Sigmoid colon (tissue), 7 donors: ENCODE measurements at regions of chr1 and their contacts with region 1.

Region 1: DNA sequence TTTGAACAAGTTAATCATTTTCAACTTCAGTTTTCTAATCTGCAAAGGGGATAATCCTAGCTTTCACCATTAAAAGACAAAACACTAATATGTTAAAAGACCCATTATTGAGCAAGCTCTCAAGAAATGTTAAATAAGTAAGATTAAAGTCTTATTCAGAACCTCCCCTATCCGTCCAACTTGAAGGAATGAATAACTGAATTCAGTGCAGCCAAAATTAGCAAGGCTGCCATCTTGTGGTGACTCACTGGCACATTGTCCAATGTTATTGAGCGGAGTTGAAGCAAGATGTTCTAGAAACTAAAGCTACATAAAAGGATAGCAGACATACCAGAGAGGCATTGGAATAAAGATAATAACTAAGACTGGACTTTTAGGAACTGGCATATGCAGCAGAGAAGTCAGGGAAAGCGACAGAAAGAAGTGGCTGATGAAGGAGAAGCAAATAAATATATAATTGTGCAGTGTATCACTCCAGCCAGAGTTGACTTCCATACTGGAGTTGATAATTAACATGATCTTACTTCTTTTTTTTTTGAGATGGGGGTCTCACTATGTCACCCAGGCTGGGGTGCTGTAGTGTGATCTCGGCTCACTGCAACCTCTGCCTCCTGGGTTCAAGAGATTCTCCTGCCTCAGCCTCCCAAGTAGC is 8.2 kb upstream of the CAP1 start:
- DNase-seq: no peak
- H3K4me3 ChIP-seq: no peak overlapping the region
- H3K27ac ChIP-seq: no peak overlapping the region
- H3K4me1 ChIP-seq: peaks cover 0 to 25% (median 15%) of the 10 kb centered on the region in 4 donors
- H3K27me3 ChIP-seq: no peaks in the 10 kb centered on the region
- CTCF ChIP-seq: peak; percentile 19 to 60 (median 48)
- EP300 ChIP-seq: no peak
- POLR2A ChIP-seq: no peak

Region 2: GRCh38 chr1:39825432-39825951 is 206.9 kb before region 1 on chr1:
- intact Hi-C with region 1: loop called (anchors 5 kb)
- DNase-seq: no peak
- H3K4me3 ChIP-seq: no peak overlapping the region
- H3K27ac ChIP-seq: no peak overlapping the region
- H3K4me1 ChIP-seq: no peaks in the 10 kb centered on the region
- H3K27me3 ChIP-seq: peaks cover 0 to 22% (median under 1%) of the 10 kb centered on the region in 3 donors
- CTCF ChIP-seq: no peak
- EP300 ChIP-seq: no peak
- POLR2A ChIP-seq: no peak

Region 3: DNA sequence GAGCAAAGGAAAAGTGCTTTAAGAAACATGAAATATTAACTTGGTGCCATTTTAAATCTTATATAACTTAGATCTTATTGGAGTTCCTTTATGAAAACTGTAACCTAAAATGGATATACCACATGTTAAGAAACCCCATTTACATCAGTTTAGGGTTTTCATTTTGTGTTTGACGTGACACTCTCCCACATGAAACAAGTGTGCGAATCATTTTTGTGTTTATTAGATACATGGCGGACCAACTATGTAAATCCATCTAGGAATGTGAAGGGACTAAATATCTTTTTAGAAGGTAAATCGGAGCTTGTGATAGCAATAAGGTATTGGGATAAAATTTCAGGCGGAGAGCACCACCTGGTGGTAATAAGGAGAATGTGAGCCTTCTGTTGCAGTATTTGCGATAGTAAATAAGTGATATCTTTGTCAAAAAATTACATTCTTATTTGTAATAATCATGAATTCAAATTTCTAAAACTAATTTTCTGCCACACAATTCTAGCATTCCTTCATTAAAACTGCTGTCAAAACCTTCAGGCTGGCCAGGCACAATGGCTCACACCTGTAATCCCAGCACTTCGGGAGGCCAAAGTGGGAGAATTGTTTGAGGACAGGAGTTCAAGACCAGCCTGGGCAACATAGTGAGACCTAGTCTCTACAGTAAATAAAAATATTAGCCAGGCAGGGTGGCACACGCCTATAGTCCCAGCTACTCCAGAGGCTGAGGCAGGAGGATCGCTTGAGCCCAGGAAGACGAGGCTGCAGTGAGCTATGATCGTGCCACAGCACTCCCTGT is 372.5 kb after region 1 on chr1:
- intact Hi-C with region 1: no loop called
- DNase-seq: no peak
- H3K4me3 ChIP-seq: peak overlapping the region in 1 of 4 donors; percentile 11
- H3K27ac ChIP-seq: peak overlapping the region in 1 of 4 donors; percentile 28
- H3K4me1 ChIP-seq: peaks cover 0 to 8% (median 0%) of the 10 kb centered on the region in 4 donors
- H3K27me3 ChIP-seq: no peaks in the 10 kb centered on the region
- CTCF ChIP-seq: peak; percentile 63 to 87 (median 76)
- EP300 ChIP-seq: no peak
- POLR2A ChIP-seq: no peak

Region 4: GRCh38 chr1:41891199-41891896 is 1859.0 kb after region 1 on chr1:
- intact Hi-C with region 1: no loop called
- DNase-seq: no peak
- H3K4me3 ChIP-seq: peak overlapping the region; percentile 14 to 38 (median 30)
- H3K27ac ChIP-seq: peak overlapping the region; percentile 37 to 54 (median 45)
- H3K4me1 ChIP-seq: peaks cover 0 to 27% (median 19%) of the 10 kb centered on the region in 4 donors
- H3K27me3 ChIP-seq: no peaks in the 10 kb centered on the region
- CTCF ChIP-seq: no peak
- EP300 ChIP-seq: no peak
- POLR2A ChIP-seq: no peak